ENCODE measurements at regions of chr15 and their contacts with region 1.

Region 1: GRCh38 chr15:55407949-55408791 is at the starts of genes CCPG1 and PIERCE2:
- DNase-seq: peak; percentile 89 to 91
- ATAC-seq: peak; percentile 92 to 95
- H3K4me3 ChIP-seq: peak within 1 kb of the TSS; percentile 75 to 84 (median 78)
- H3K27ac ChIP-seq: peak within 1 kb of the TSS; percentile 89 to 96 (median 92)
- H3K4me1 ChIP-seq: peaks cover 20 to 31% of the 10 kb centered on the region in 2 donors
- H3K27me3 ChIP-seq: no peaks in the 10 kb centered on the region
- CTCF ChIP-seq: peak; percentile 94 to 97 (median 96)
- POLR2A ChIP-seq: peak; percentile 98
- total RNA-seq, gene CCPG1: 61.6 to 142 (median 103) TPM
- total RNA-seq, gene PIERCE2: 5.1 to 11.8 (median 6.0) TPM

Region 2: DNA sequence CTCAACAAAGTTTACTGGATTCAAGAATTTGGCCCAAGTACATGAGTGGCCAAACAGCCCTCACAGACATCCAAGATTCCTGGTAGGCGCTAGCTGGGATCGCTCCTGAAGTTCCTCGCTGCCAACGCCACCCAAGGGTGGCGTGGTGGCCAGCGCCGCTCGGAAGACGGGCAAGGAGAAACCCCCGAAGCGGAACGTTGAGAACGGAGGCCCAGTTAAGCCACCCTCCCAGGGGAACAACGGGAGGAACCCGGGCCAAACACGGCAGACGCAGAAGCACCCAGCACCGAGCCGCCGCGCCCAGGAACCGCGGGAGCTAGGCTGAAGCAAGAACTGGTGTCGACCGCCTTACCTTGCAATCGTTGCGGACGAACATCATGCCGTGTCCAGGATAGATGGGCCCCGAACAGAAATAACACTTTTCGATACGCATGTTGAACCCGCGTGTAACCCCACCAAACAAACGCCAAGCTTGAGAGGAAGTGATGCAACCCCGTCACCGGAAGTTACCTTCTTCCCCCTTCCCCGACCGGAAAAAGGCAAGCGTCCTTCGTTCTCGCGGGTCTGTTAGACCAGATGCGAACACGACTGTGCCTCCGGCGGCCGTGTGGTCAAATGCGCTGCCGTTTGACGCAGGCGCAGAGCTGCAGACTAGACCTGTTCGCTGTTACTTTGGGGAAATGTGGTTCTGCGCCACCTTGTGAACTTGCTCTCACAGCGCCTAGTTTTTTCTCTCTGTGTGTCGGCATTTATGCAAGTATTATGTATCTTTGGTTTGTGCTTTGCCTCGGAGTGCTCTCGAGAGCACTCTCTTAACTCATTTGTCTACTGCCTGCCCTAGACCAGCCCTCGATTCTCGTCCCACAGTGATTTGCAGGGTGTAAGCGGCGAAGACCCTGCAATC is 211.5 kb before region 1 on chr15 and contains the start of gene RSL24D1:
- in situ Hi-C with region 1: no loop called
- intact Hi-C with region 1: loop called (anchors 2 kb)
- DNase-seq: peak; percentile 95 to 97
- ATAC-seq: peak; percentile 99
- H3K4me3 ChIP-seq: peak within 1 kb of the TSS; percentile 83 to 100 (median 94)
- H3K27ac ChIP-seq: peak within 1 kb of the TSS; percentile 89 to 95 (median 94)
- H3K4me1 ChIP-seq: peaks cover 23 to 30% of the 10 kb centered on the region in 2 donors
- H3K27me3 ChIP-seq: no peaks in the 10 kb centered on the region
- CTCF ChIP-seq: peak in 4 of 5 experiments; percentile 9 to 49 (median 36)
- POLR2A ChIP-seq: peak; percentile 66 to 79
- total RNA-seq, gene RSL24D1: 36.8 to 53.3 (median 52.0) TPM

Region 3: DNA sequence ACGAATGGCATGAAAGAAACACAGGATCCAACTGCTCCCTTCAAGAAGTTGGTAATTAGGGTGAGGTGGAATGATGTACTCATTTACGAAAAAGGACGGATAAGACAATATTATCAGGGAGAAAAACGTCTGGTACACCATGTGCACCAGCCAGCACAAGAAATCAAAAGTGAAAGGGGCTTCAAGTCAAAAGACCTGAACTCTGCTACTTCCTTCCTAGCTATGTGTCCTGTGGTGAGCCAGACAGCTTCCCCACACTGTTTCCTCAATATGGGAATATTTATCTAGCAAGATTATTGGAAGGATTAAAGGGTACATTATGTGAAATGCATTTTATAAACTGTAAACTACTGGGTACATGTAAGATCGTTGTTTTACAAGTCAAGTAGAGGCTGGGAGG is 152.5 kb before region 1 on chr15:
- in situ Hi-C with region 1: no loop called
- intact Hi-C with region 1: no loop called
- DNase-seq: no peak
- ATAC-seq: peak in 1 of 2 donors; percentile 51
- H3K4me3 ChIP-seq: no peak overlapping the region
- H3K27ac ChIP-seq: peak overlapping the region in 1 of 4 donors; percentile 19
- H3K4me1 ChIP-seq: no peaks in the 10 kb centered on the region
- H3K27me3 ChIP-seq: no peaks in the 10 kb centered on the region
- CTCF ChIP-seq: no peak
- POLR2A ChIP-seq: no peak

Region 4: GRCh38 chr15:55318588-55319494 is 89.3 kb before region 1 on chr15 and contains the starts of genes PIGB and PIGBOS1:
- in situ Hi-C with region 1: loop called in 1 of 4 experiments (anchors 25 kb)
- intact Hi-C with region 1: loop called (anchors 2 kb)
- DNase-seq: peak; percentile 71 to 80
- ATAC-seq: peak; percentile 91 to 93
- H3K4me3 ChIP-seq: peak within 1 kb of the TSS; percentile 87 to 99 (median 92)
- H3K27ac ChIP-seq: peak within 1 kb of the TSS; percentile 79 to 96 (median 88)
- H3K4me1 ChIP-seq: peaks cover 17 to 25% of the 10 kb centered on the region in 2 donors
- H3K27me3 ChIP-seq: no peaks in the 10 kb centered on the region
- CTCF ChIP-seq: peak in 2 of 5 experiments; percentile 20 to 22
- POLR2A ChIP-seq: peak; percentile 13 to 47
- total RNA-seq, gene PIGB: 1.2 to 22.9 (median 5.7) TPM
- total RNA-seq, gene PIGBOS1: 5.7 to 11.8 (median 9.7) TPM

Region 5: DNA sequence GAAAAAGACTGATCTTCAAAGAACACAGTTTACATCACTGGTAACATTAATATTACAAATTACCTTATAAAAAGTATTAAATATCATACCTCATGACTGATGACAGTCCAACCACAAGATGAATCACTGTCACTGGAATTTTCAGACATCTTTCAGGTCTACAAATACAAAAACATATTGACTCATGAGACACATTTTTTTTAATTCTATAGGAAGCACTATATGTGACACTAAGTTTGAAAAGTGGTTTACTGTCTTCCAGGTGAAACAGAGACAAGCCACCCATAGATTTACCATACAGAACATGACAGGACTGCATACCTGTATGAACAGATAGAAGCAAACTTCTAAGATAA is 18.9 kb before region 1 on chr15:
- in situ Hi-C with region 1: no loop called
- intact Hi-C with region 1: loop called (anchors 2 kb)
- DNase-seq: no peak
- ATAC-seq: peak; percentile 68 to 72
- H3K4me3 ChIP-seq: no peak overlapping the region
- H3K27ac ChIP-seq: peak overlapping the region; percentile 51 to 73 (median 62)
- H3K4me1 ChIP-seq: peaks cover 19 to 22% of the 10 kb centered on the region in 2 donors
- H3K27me3 ChIP-seq: no peaks in the 10 kb centered on the region
- CTCF ChIP-seq: no peak
- POLR2A ChIP-seq: no peak

Region 6: GRCh38 chr15:55434989-55435825 is 27.0 kb after region 1 on chr15:
- in situ Hi-C with region 1: no loop called
- intact Hi-C with region 1: loop called (anchors 1 kb)
- DNase-seq: no peak
- ATAC-seq: peak; percentile 58 to 81
- H3K4me3 ChIP-seq: no peak overlapping the region
- H3K27ac ChIP-seq: no peak overlapping the region
- H3K4me1 ChIP-seq: no peaks in the 10 kb centered on the region
- H3K27me3 ChIP-seq: no peaks in the 10 kb centered on the region
- CTCF ChIP-seq: peak in 4 of 5 experiments; percentile 29 to 56 (median 33)
- POLR2A ChIP-seq: no peak

Region 7: GRCh38 chr15:55588070-55588814 is 180.1 kb after region 1 on chr15 and contains the start of gene PYGO1:
- in situ Hi-C with region 1: no loop called
- intact Hi-C with region 1: loop called (anchors 1 kb)
- DNase-seq: peak; percentile 24 to 54
- ATAC-seq: peak; percentile 73 to 82
- H3K4me3 ChIP-seq: peak within 1 kb of the TSS; percentile 65 to 76 (median 70)
- H3K27ac ChIP-seq: peak within 1 kb of the TSS; percentile 88 to 93 (median 92)
- H3K4me1 ChIP-seq: peaks cover 3 to 23% of the 10 kb centered on the region in 2 donors
- H3K27me3 ChIP-seq: no peaks in the 10 kb centered on the region
- CTCF ChIP-seq: peak in 1 of 5 experiments; percentile 10
- POLR2A ChIP-seq: peak; percentile 41 to 78
- total RNA-seq, gene PYGO1: 26.7 to 39.1 (median 32.3) TPM

Region 8: GRCh38 chr15:55627730-55628368 is 219.7 kb after region 1 on chr15:
- in situ Hi-C with region 1: no loop called
- intact Hi-C with region 1: loop called (anchors 5 kb)
- DNase-seq: peak; percentile 85 to 92
- ATAC-seq: peak; percentile 90 to 92
- H3K4me3 ChIP-seq: peak overlapping the region in 3 of 4 donors; percentile 25 to 46 (median 43)
- H3K27ac ChIP-seq: peak overlapping the region; percentile 88 to 97 (median 94)
- H3K4me1 ChIP-seq: peaks cover 30 to 38% of the 10 kb centered on the region in 2 donors
- H3K27me3 ChIP-seq: no peaks in the 10 kb centered on the region
- CTCF ChIP-seq: no peak
- POLR2A ChIP-seq: peak; percentile 63 to 82

Measured in gastrocnemius medialis (tissue), 4 donors.